ENCODE measurements at regions of chr14 and their contacts with region 1.

Region 1: DNA sequence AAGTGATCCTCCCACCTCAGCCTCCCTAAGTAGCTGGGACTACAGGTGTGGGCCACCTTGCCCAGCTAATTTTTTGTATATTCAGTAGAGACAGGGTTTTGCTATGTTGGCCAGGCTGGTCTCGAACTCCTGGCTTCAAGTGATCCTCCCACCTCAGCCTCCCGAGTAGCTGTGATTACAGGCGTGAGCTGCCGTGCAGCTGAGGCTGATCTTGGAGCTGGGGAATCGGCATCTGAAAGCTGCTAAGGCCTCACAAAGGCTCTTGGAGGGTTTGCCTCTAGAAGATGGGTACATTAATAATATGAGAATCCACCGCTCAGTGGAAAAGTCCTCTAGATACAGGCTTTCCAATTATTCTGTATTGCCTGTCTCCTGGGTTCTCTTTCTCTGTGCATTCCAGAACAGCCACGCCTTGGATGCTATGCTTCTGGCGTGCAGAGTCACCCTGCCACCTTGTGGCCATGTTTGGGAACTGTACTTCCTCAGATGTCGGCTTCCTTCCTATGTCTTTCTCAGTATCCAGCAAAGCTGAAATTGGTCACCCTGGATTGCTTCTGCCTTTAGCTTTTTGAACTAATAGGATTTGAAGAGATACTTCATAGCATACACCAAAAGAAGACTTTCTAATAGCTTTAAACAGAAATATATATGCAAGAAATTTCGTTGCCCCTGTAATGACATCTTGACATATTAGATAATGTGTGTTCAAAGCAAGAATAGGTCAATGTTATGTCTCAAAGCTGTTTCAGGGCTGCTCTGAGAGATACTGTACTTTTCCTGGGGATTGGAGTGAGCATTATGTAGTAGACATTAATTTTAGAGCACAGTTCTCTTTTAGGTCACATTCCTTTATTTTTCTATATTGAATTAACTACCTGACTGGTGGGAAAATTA is 75.4 kb downstream of the SNAPC1 start:
- DNase-seq: peak; percentile 60 to 83
- ATAC-seq: peak; percentile 98 to 99
- H3K4me3 ChIP-seq: no peak overlapping the region
- H3K27ac ChIP-seq: peak overlapping the region; percentile 27 to 78; a peak in 4 of 6 replicates
- H3K4me1 ChIP-seq: peaks cover 15% of the 10 kb centered on the region
- CTCF ChIP-seq: peak; percentile 96
- EP300 ChIP-seq: no peak
- POLR2A ChIP-seq: no peak
- RAD21 ChIP-seq: peak; percentile 98 to 99

Region 2: DNA sequence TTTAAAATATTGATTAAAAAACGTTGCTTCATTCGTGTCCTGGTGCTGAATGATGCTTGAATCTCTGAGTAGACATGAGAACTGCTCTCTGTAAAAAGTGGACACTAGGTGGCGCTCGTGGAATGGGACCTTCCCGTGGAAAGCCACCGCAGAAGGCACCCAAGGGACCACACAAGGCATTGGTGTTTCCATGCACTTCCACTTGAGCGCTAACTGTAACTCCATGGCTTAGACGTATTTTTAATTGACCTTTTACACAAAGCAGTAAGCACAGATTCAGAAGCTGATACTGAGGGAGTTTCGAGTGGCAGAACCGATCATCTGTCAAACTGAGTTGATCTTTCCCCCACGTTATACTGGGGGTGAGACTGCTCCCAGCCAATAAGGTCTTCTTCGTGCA is 380.9 kb before region 1 on chr14:
- CTCF ChIA-PET with region 1: interaction called, 196 read pairs
- POLR2A ChIA-PET with region 1: no interaction called
- DNase-seq: peak; percentile 76 to 86
- ATAC-seq: peak; percentile 87 to 93
- H3K4me3 ChIP-seq: no peak overlapping the region
- H3K27ac ChIP-seq: no peak overlapping the region
- H3K4me1 ChIP-seq: peaks cover 9% of the 10 kb centered on the region
- CTCF ChIP-seq: peak; percentile 94
- EP300 ChIP-seq: no peak
- POLR2A ChIP-seq: no peak
- RAD21 ChIP-seq: peak; percentile 90 to 93

Region 3: GRCh38 chr14:61561657-61562276 is 275.8 kb before region 1 on chr14:
- CTCF ChIA-PET with region 1: interaction called, 10 read pairs
- POLR2A ChIA-PET with region 1: interaction called, 4 read pairs
- DNase-seq: peak; percentile 77 to 95
- ATAC-seq: peak; percentile 65 to 67
- H3K4me3 ChIP-seq: no peak overlapping the region
- H3K27ac ChIP-seq: peak overlapping the region; percentile 96 to 99
- H3K4me1 ChIP-seq: peaks cover 92% of the 10 kb centered on the region
- CTCF ChIP-seq: no peak
- EP300 ChIP-seq: peak; percentile 87 to 95; a peak in 4 of 5 replicates
- POLR2A ChIP-seq: no peak; the same call in 1 of the 2 replicates
- RAD21 ChIP-seq: peak; percentile 34 to 65

Region 4: GRCh38 chr14:61681413-61681812 is 156.2 kb before region 1 on chr14:
- CTCF ChIA-PET with region 1: no interaction called
- POLR2A ChIA-PET with region 1: no interaction called
- DNase-seq: no peak
- ATAC-seq: no peak
- H3K4me3 ChIP-seq: no peak overlapping the region
- H3K27ac ChIP-seq: no peak overlapping the region
- H3K4me1 ChIP-seq: no peaks in the 10 kb centered on the region
- CTCF ChIP-seq: no peak
- EP300 ChIP-seq: no peak
- POLR2A ChIP-seq: no peak
- RAD21 ChIP-seq: no peak

Region 5: DNA sequence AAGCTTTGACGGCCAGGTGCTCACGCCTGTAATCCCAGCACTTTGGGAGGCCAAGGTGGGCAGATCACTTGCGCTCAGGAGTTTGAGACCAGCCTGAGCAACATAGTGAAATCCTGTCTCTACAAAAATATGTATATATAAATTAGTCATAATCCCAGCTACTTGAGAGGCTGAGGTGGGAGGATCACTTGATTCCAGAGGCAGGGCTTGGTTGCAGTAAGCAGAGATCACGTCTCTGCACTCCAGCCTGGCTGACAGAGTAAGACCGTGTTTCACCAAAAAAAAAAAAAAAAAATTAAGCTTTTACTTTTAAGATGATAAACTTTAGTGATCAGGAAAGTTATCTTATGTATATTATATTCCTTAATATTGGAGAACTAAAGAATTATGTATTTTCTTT is 93.3 kb before region 1 on chr14:
- CTCF ChIA-PET with region 1: interaction called, 10 read pairs
- POLR2A ChIA-PET with region 1: no interaction called
- DNase-seq: no peak
- ATAC-seq: peak in 1 of 2 experiments; percentile 22; a peak in 2 of 6 replicates
- H3K4me3 ChIP-seq: no peak overlapping the region
- H3K27ac ChIP-seq: no peak overlapping the region
- H3K4me1 ChIP-seq: peaks cover 36% of the 10 kb centered on the region
- CTCF ChIP-seq: no peak
- EP300 ChIP-seq: no peak
- POLR2A ChIP-seq: no peak
- RAD21 ChIP-seq: no peak

Region 6: DNA sequence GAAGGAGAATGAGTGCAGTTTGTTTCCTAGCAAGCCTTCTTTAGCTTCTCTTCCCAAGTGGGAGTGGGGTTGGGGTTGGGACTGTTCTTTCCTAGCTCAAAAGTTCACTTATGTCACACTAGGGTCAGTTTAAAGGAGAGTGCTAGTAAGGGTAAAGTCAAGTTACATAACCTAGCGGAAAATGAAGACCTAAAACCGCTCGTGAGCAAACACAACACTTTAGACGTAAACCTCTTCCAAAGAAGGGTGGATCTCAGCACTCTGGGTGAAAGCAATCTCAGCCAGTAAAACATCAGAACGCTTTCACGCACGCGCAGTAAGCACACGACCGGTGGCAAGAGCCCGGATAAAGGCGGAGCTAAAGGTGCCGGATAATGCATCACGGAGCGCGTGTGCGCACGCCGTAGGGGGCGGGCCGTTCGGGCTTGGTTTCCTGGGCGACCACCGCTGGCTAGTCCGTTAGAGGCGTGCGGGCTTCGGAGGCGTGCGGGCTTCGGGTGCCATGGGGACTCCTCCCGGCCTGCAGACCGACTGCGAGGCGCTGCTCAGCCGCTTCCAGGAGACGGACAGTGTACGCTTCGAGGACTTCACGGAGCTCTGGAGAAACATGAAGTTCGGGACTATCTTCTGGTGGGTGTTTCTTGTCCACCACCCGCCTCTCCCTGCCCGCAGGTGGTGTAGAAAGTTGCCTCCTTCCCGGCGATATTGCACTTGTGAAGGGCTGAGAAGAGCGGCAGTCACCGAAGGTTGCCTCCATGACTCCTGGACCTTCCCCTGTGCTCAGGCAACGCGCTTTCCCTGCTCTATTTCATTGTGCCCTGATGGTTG is 75.4 kb before region 1 on chr14 and contains the start of gene SNAPC1:
- CTCF ChIA-PET with region 1: interaction called, 10 read pairs
- POLR2A ChIA-PET with region 1: no interaction called
- DNase-seq: peak; percentile 97 to 99
- ATAC-seq: peak; percentile 90 to 96
- H3K4me3 ChIP-seq: peak within 1 kb of the TSS; percentile 80
- H3K27ac ChIP-seq: peak within 1 kb of the TSS; percentile 80 to 88
- H3K4me1 ChIP-seq: peaks cover 36% of the 10 kb centered on the region
- CTCF ChIP-seq: no peak
- EP300 ChIP-seq: no peak
- POLR2A ChIP-seq: peak; percentile 91
- RAD21 ChIP-seq: no peak
- polyA plus RNA-seq, gene SNAPC1: 15.2 and 30.5 TPM in 2 replicates

Region 7: DNA sequence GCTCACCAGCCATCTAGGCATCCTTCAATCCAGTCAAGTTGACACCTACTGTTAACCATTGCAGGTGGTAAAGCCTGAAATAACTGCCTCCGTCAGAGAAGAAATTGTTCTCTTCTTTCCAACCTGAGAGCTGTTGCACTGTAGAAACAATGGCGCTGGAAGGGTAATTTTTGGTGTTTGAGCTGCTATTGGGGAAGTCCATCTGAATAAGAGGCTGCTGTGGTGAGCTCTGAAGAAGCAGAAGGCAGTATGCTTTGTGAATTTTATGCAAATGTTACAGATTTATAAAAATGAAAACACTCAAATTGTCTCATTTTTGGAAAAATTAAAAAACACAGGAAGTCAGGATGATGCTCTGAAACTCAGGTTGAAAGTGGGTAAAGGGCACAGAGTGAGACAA is 15.1 kb before region 1 on chr14:
- CTCF ChIA-PET with region 1: interaction called, 19 read pairs
- POLR2A ChIA-PET with region 1: no interaction called
- DNase-seq: no peak
- ATAC-seq: no peak
- H3K4me3 ChIP-seq: no peak overlapping the region
- H3K27ac ChIP-seq: no peak overlapping the region
- H3K4me1 ChIP-seq: no peaks in the 10 kb centered on the region
- CTCF ChIP-seq: no peak
- EP300 ChIP-seq: no peak
- POLR2A ChIP-seq: no peak
- RAD21 ChIP-seq: no peak

Region 8: DNA sequence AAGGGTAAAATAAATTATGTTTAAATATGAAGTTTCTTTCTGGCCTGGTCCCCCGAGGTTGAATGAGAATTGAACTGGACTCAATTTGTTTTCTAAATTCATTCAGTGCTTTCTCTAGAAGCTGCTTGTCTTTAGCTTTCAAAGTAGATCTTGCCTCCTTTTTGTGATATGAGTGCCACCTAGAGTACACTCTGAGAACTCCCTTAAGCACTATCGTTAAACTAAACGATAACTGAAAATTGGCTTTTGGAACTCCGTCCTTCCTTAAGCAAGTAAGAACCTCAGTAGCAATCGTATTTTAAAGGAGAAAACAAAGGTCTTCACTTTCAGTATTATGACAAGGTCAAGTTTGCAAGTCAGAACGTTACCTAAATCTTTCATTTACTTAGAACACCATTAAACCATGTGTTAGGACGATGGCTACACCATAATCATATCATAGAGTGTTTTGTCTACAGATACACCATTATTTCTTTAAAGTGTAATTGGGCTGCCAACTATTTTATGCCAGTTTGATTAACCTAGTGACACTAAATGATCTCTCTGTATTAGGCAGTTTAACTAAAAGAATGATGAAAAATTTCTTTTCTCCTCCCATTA is 289.4 kb after region 1 on chr14:
- CTCF ChIA-PET with region 1: interaction called, 13 read pairs
- POLR2A ChIA-PET with region 1: no interaction called
- DNase-seq: peak; percentile 31 to 58
- ATAC-seq: peak; percentile 75 to 91; a peak in 3 of 6 replicates
- H3K4me3 ChIP-seq: no peak overlapping the region
- H3K27ac ChIP-seq: no peak overlapping the region
- H3K4me1 ChIP-seq: no peaks in the 10 kb centered on the region
- CTCF ChIP-seq: peak; percentile 81
- EP300 ChIP-seq: no peak
- POLR2A ChIP-seq: no peak
- RAD21 ChIP-seq: peak; percentile 88